Thyroid gland (tissue), 4 donors: ENCODE measurements at regions of chr10 and their contacts with region 1.

Region 1: DNA sequence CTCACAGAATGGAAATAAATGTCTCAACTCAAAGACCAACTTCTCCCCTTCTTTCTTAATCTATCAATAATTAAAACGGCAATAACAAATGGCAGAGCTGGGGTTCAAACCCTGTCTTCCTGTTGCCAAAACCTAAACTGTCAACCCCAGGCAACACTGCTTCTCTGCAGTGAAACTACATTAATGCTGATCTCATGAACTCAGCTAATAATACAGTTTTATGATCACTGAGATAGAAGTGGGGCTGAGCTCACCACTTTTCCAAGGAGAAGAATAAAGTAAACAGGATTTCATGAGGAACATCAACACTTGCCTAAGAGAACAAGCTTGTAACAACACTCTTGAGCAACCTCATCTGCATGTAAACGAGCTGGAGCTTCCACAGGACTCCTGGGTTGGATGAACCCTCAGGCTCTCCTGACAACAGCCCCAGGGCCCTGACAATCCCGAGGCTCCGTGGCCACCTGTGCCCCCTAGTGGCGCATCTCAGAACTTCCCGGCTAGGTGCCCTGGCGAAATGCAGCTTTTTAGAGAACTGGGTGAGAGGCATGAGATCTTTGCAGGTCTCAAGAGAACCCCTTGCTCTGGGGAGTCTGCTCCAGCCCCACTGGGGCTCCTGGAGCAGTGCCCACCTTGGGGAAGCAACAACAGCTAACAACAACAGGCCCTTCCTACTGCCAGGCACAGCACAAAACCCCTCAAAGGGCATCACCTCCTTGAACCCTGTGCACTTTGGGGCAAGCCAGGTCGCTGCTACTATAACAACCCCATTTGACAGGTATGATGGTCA is 169.3 kb downstream of the SH3PXD2A start:
- DNase-seq: peak; percentile 73 to 78
- H3K4me3 ChIP-seq: no peak overlapping the region
- H3K27ac ChIP-seq: no peak overlapping the region
- H3K4me1 ChIP-seq: no peaks in the 10 kb centered on the region
- H3K27me3 ChIP-seq: no peaks in the 10 kb centered on the region
- CTCF ChIP-seq: peak; percentile 89 to 98 (median 94)
- POLR2A ChIP-seq: no peak

Region 2: DNA sequence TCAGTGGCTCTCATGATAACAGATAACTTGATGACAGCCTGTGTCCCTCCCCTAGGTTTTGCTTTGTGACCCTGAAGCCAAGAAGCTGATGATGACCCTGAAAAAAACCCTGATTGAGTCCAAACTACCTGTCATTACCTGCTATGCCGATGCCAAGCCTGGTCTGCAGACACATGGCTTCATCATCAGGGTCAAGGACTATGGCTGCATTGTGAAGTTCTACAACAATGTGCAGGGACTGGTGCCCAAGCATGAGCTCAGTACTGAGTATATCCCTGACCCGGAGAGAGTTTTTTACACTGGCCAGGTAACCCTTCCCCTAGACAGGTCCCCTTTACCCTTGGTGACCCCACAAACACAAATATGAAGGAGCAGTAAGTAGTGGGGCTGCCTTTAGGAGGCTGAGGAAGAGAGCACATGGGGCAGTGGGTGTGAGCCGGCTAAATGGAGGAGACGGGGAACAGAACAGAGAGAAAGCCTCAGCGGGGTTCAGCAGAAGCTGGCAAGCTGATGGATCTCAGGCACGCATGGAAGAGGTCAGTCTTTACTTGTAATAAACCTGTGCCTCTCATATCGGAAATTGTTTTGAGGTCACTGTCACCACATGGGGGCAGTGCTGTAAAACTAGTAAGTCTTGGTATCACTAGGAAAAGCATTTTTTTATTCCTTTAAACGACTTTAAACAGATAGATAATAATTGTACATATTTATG is 269.5 kb before region 1 on chr10:
- intact Hi-C with region 1: loop called (anchors 10 kb)
- DNase-seq: peak; percentile 64 to 66
- H3K4me3 ChIP-seq: no peak overlapping the region
- H3K27ac ChIP-seq: no peak overlapping the region
- H3K4me1 ChIP-seq: no peaks in the 10 kb centered on the region
- H3K27me3 ChIP-seq: no peaks in the 10 kb centered on the region
- CTCF ChIP-seq: peak in 4 of 6 experiments; percentile 45 to 62 (median 57)
- POLR2A ChIP-seq: no peak

Region 3: DNA sequence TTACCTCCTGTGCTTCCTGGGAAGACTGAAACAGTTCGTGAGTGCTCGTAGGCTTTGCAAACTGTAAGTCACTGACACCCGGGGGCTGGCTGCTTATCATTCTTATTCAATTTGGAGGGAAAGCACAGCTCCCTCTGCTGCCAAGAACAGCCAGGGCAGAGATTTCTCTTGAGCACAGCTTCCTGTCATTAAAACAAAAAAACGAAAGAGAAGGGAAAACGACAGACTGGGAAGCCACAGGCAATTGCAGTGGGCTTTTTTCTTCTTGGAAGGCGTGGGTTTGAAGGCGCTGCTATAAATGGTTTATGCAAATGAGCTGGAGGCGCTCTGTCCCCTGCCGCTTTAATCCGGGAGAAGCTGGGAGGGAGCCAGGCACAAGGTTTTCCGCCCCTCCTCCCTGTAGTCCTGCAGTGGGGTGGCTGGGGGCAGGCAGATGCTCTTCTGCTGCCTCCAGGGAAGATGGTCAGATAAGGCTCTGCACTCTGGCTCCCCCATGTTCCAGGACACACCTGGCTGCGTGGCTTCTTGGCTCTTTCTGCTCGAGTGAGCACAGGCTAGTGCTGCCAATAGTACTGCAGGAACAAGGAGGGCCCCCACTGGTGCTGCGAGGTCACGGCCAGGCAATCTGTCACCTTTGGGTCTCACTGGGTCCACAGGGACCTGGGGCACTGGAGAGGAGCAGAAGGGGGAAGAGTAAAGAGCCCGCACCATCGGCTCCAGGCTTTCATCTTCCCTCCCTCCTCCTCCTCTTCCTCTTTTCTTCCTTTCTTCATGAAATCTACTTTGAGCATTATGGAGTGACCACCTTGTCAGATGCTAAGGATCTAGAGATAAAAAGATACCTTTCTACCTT is 143.1 kb before region 1 on chr10:
- intact Hi-C with region 1: no loop called
- DNase-seq: peak; percentile 76 to 83
- H3K4me3 ChIP-seq: no peak overlapping the region
- H3K27ac ChIP-seq: no peak overlapping the region
- H3K4me1 ChIP-seq: peaks cover 12 to 21% of the 10 kb centered on the region in 2 donors
- H3K27me3 ChIP-seq: no peaks in the 10 kb centered on the region
- CTCF ChIP-seq: peak in 1 of 6 experiments; percentile 27
- POLR2A ChIP-seq: no peak

Region 4: DNA sequence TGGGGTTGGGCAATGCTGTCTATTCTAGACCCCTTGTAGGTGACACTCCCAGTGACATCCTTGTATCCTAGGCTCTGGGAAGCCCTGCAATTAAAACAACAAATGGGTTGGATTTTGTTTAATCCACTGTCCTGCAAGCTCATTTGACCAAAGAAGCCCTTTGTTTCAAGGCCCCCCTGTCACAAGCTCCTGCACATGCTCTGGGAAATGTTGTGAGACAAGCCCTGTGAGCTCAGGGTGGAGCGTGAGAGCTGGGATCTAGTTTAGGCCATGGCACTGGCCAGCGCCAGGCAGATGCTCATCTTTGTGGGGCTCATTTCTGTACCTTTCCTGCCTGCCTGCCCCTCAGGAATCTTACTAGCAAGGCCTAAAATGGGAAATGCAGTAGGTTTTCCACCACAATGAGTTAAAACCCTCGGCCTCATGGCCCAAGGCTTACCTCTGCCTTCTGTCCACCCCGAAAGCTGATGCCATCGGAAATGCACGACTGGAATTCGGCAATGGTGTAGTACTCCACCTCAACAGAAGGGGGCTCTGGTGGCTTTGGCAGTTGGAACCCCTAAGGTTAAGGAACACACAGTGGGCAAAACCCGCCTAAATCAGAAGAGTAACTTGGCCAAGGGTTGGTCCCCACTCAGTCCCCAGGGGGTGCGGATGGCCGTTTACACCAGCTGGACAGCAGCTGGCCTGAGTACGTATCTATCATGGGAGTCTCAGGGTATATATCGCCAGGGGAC is 80.5 kb before region 1 on chr10:
- intact Hi-C with region 1: loop called (anchors 2 kb)
- DNase-seq: peak; percentile 35 to 45
- H3K4me3 ChIP-seq: no peak overlapping the region
- H3K27ac ChIP-seq: no peak overlapping the region
- H3K4me1 ChIP-seq: peaks cover 5 to 10% of the 10 kb centered on the region in 2 donors
- H3K27me3 ChIP-seq: no peaks in the 10 kb centered on the region
- CTCF ChIP-seq: peak; percentile 45 to 70 (median 54)
- POLR2A ChIP-seq: no peak